Endothelial cell of umbilical vein (primary cell): ENCODE measurements at regions of chr18 and their contacts with region 1.

Region 1: DNA sequence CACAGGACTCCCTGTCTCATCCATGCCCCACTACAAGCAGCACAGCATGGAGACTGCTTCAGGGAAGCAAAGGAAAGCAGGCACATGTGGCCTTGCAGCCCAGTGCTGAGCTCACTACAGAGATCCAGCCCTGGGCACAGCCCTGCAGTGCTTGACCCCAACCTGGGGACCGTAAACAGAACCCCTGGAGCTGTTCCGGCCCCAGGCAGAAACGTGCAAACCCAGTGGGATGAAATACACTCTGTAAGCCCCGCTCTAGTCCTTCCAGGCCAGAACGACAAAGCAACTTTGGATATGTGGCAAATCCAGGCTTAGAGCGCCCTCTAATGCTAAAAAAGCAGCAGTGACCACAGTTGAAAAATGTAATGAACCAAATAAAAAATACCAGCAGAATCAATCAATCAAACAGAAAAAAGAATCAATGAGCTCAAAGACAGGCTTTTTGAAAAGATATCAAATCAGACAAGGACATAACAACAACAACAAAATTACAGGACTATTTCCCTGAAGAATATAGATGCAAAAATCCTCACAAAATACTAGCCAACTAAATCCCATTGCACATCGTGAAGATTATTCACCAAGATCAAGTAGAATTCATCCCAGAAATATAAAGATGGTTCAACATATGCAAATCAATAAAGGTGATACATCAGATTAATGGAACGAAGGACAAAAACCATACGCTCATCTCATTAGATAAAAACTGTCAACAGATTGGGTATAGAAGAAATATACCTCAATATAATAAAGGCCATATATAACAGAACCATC is 45.6 kb downstream of the ZNF519 start:
- DNase-seq: peak; percentile 34
- H3K4me3 ChIP-seq: no peak overlapping the region
- H3K27ac ChIP-seq: no peak overlapping the region
- H3K4me1 ChIP-seq: no peaks in the 10 kb centered on the region
- H3K27me3 ChIP-seq: no peaks in the 10 kb centered on the region
- CTCF ChIP-seq: peak; percentile 58 to 60
- POLR2A ChIP-seq: no peak

Region 2: GRCh38 chr18:13558124-13558523 is 528.5 kb before region 1 on chr18:
- CTCF ChIA-PET with region 1: no interaction called
- POLR2A ChIA-PET with region 1: no interaction called
- dilution Hi-C with region 1: no loop called
- intact Hi-C with region 1: loop called (anchors 5 kb)
- DNase-seq: peak; percentile 40
- H3K4me3 ChIP-seq: no peak overlapping the region
- H3K27ac ChIP-seq: no peak overlapping the region
- H3K4me1 ChIP-seq: no peaks in the 10 kb centered on the region
- H3K27me3 ChIP-seq: peaks cover 6 to 23% of the 10 kb centered on the region in 2 experiments
- CTCF ChIP-seq: peak; percentile 47 to 62
- POLR2A ChIP-seq: no peak

Region 3: GRCh38 chr18:13568443-13569392 is 517.9 kb before region 1 on chr18:
- CTCF ChIA-PET with region 1: no interaction called
- POLR2A ChIA-PET with region 1: no interaction called
- dilution Hi-C with region 1: no loop called
- intact Hi-C with region 1: no loop called
- DNase-seq: no peak
- H3K4me3 ChIP-seq: no peak overlapping the region
- H3K27ac ChIP-seq: no peak overlapping the region
- H3K4me1 ChIP-seq: no peaks in the 10 kb centered on the region
- H3K27me3 ChIP-seq: no peaks in the 10 kb centered on the region
- CTCF ChIP-seq: no peak
- POLR2A ChIP-seq: no peak

Region 4: GRCh38 chr18:13762690-13763439 is 323.8 kb before region 1 on chr18:
- CTCF ChIA-PET with region 1: no interaction called
- POLR2A ChIA-PET with region 1: no interaction called
- dilution Hi-C with region 1: no loop called
- intact Hi-C with region 1: no loop called
- DNase-seq: no peak
- H3K4me3 ChIP-seq: no peak overlapping the region
- H3K27ac ChIP-seq: no peak overlapping the region
- H3K4me1 ChIP-seq: no peaks in the 10 kb centered on the region
- H3K27me3 ChIP-seq: no peaks in the 10 kb centered on the region
- CTCF ChIP-seq: no peak
- POLR2A ChIP-seq: no peak

Region 5: GRCh38 chr18:13775058-13775457 is 311.6 kb before region 1 on chr18:
- CTCF ChIA-PET with region 1: no interaction called
- POLR2A ChIA-PET with region 1: no interaction called
- dilution Hi-C with region 1: no loop called
- intact Hi-C with region 1: no loop called
- DNase-seq: no peak
- H3K4me3 ChIP-seq: no peak overlapping the region
- H3K27ac ChIP-seq: no peak overlapping the region
- H3K4me1 ChIP-seq: no peaks in the 10 kb centered on the region
- H3K27me3 ChIP-seq: no peaks in the 10 kb centered on the region
- CTCF ChIP-seq: no peak
- POLR2A ChIP-seq: no peak

Region 6: DNA sequence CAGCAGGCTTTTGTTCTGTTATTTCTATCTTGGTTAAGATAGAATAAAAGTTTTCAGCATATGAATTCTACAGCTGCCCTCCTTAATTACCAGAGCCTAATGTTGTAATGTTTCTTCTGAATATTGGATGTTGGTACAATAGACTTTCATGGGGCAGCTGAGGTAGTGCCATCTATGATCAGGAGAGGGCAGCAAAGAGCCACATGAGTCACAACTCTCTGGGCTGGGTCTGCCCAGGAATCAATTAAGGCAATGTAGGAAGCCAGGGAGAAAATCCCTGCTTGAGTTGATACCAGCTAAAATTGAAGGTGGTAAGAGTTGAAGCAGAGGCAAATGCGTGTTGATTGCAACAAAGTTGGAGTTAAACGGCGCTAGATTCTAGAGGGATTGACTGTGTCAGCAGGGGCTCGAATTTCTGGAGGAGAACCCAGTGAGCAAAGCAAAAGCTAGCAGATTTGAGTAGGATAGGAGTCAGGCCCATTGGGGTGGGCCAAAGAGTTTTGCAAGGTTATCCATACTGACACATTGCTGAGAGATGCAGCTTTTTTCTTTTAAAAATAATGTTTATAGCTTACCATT is 273.3 kb before region 1 on chr18:
- CTCF ChIA-PET with region 1: interaction called, 46 read pairs
- POLR2A ChIA-PET with region 1: no interaction called
- dilution Hi-C with region 1: no loop called
- intact Hi-C with region 1: loop called (anchors 2 kb)
- DNase-seq: peak; percentile 74
- H3K4me3 ChIP-seq: no peak overlapping the region
- H3K27ac ChIP-seq: no peak overlapping the region
- H3K4me1 ChIP-seq: no peaks in the 10 kb centered on the region
- H3K27me3 ChIP-seq: no peaks in the 10 kb centered on the region
- CTCF ChIP-seq: peak; percentile 76 to 80
- POLR2A ChIP-seq: no peak

Region 7: GRCh38 chr18:13823707-13824395 is 262.8 kb before region 1 on chr18 and contains the start of gene MC5R:
- CTCF ChIA-PET with region 1: interaction called, 17 read pairs
- POLR2A ChIA-PET with region 1: no interaction called
- dilution Hi-C with region 1: no loop called
- intact Hi-C with region 1: loop called (anchors 1 kb)
- DNase-seq: peak; percentile 53
- H3K4me3 ChIP-seq: peak within 1 kb of the TSS in 1 of 3 experiments; percentile 18
- H3K27ac ChIP-seq: no peak within 1 kb of the TSS
- H3K4me1 ChIP-seq: no peaks in the 10 kb centered on the region
- H3K27me3 ChIP-seq: peaks cover 4 to 5% of the 10 kb centered on the region in 2 experiments
- CTCF ChIP-seq: peak; percentile 89 to 95
- POLR2A ChIP-seq: no peak
- total RNA-seq, gene MC5R: not detected in 2 replicates

Region 8: DNA sequence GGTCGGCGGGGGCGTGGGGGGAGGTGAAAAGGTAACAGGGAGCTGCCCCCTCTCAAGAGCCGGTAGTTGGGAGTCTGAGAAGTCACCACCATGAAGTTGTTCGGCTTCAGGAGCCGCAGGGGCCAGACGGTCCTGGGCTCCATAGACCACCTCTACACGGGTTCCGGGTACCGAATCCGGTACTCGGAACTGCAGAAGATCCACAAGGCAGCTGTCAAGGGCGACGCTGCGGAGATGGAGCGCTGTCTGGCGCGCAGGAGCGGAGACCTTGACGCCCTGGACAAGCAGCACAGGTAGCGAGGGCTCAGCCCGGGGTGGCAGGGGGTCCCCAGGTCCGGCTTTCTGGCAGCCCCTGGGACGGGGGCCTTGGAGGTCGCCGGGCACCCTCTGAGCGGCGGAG is 92.7 kb after region 1 on chr18:
- CTCF ChIA-PET with region 1: no interaction called
- POLR2A ChIA-PET with region 1: no interaction called
- dilution Hi-C with region 1: no loop called
- intact Hi-C with region 1: no loop called
- DNase-seq: no peak
- H3K4me3 ChIP-seq: no peak overlapping the region
- H3K27ac ChIP-seq: no peak overlapping the region
- H3K4me1 ChIP-seq: no peaks in the 10 kb centered on the region
- H3K27me3 ChIP-seq: peaks cover 0 to 2% of the 10 kb centered on the region in 2 experiments
- CTCF ChIP-seq: no peak
- POLR2A ChIP-seq: no peak